B cell (primary cell): ENCODE measurements at regions of chr15 and their contacts with region 1.

Region 1: DNA sequence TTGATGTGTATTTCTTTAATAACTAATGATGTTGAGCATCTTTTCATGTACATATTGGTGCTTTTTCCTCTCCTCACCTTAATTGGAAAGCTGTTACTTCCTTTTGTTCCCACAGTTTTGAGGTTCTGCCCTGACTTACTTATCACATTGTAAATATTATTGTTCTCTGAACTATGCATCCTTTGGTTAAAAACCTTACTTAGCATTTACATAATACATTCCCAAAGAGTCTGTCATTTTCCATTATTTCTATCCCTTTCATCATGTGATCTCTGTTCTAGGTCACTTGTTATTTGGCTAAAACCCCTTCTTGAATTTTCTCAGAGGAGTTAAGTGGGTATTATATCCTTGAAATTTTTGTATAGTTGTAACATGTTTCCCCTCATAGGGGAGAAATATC is 33.0 kb downstream of the SLC12A6 start:
- DNase-seq: no peak
- ATAC-seq: no peak
- H3K4me3 ChIP-seq: no peak overlapping the region
- H3K4me3 Mint-ChIP-seq: no peak overlapping the region
- H3K27ac ChIP-seq: peak overlapping the region in 1 of 2 donors; percentile 38
- H3K27ac Mint-ChIP-seq: no peak overlapping the region
- H3K4me1 ChIP-seq: peaks cover 7 to 13% of the 10 kb centered on the region in 2 donors
- H3K4me1 Mint-ChIP-seq: peaks cover 53% of the 10 kb centered on the region
- H3K27me3 ChIP-seq: no peaks in the 10 kb centered on the region
- H3K27me3 Mint-ChIP-seq: no peaks in the 10 kb centered on the region
- CTCF ChIP-seq: no peak

Region 2: DNA sequence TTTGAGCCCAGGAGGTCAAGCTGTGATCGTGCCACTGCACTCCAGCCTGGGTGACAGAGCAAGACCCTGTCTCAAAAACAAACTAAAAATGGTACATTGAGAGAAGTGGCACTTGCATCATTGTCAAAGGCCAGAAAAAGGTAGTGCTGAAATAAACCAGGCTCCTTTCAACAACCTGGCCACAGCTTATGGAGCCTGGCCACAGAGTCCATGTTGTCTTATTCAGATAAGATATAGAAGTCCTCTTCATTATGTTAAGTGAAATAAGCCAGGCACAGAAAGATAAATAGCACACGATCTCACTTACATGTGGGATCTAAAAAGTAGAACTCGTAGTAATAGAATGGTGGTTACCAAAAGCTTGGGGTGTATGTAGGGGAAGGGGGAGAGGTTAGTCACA is 45.0 kb before region 1 on chr15:
- CTCF ChIA-PET with region 1: interaction called, 4 read pairs
- POLR2A ChIA-PET with region 1: no interaction called
- intact Hi-C with region 1: loop called (anchors 10 kb)
- DNase-seq: no peak
- ATAC-seq: no peak
- H3K4me3 ChIP-seq: no peak overlapping the region
- H3K4me3 Mint-ChIP-seq: no peak overlapping the region
- H3K27ac ChIP-seq: no peak overlapping the region
- H3K27ac Mint-ChIP-seq: peak overlapping the region; percentile 28
- H3K4me1 ChIP-seq: no peaks in the 10 kb centered on the region
- H3K4me1 Mint-ChIP-seq: no peaks in the 10 kb centered on the region
- H3K27me3 ChIP-seq: no peaks in the 10 kb centered on the region
- H3K27me3 Mint-ChIP-seq: no peaks in the 10 kb centered on the region
- CTCF ChIP-seq: no peak

Region 3: GRCh38 chr15:34318277-34319079 is 13.9 kb after region 1 on chr15:
- CTCF ChIA-PET with region 1: interaction called, 3 read pairs
- POLR2A ChIA-PET with region 1: interaction called, 8 read pairs
- intact Hi-C with region 1: loop called (anchors 2 kb)
- DNase-seq: peak; percentile 52
- ATAC-seq: peak; percentile 77
- H3K4me3 ChIP-seq: peak overlapping the region; percentile 45 to 88 (median 70)
- H3K4me3 Mint-ChIP-seq: peak overlapping the region; percentile 89
- H3K27ac ChIP-seq: peak overlapping the region; percentile 41 to 81
- H3K27ac Mint-ChIP-seq: peak overlapping the region; percentile 76
- H3K4me1 ChIP-seq: peaks cover 24 to 30% of the 10 kb centered on the region in 2 donors
- H3K4me1 Mint-ChIP-seq: peaks cover 65% of the 10 kb centered on the region
- H3K27me3 ChIP-seq: no peaks in the 10 kb centered on the region
- H3K27me3 Mint-ChIP-seq: no peaks in the 10 kb centered on the region
- CTCF ChIP-seq: no peak

Region 4: GRCh38 chr15:34342737-34343575 is 38.3 kb after region 1 on chr15 and contains the starts of genes NOP10 and NUTM1:
- CTCF ChIA-PET with region 1: no interaction called
- POLR2A ChIA-PET with region 1: no interaction called
- intact Hi-C with region 1: no loop called
- DNase-seq: peak; percentile 93
- ATAC-seq: peak; percentile 85
- H3K4me3 ChIP-seq: peak within 1 kb of the TSS; percentile 94 to 99 (median 98)
- H3K4me3 Mint-ChIP-seq: peak within 1 kb of the TSS; percentile 85
- H3K27ac ChIP-seq: peak within 1 kb of the TSS; percentile 79 to 81
- H3K27ac Mint-ChIP-seq: peak within 1 kb of the TSS; percentile 63
- H3K4me1 ChIP-seq: peaks cover 16 to 18% of the 10 kb centered on the region in 2 donors
- H3K4me1 Mint-ChIP-seq: peaks cover 20% of the 10 kb centered on the region
- H3K27me3 ChIP-seq: no peaks in the 10 kb centered on the region
- H3K27me3 Mint-ChIP-seq: no peaks in the 10 kb centered on the region
- CTCF ChIP-seq: peak; percentile 97
- total RNA-seq, gene NOP10: 65.6 and 68.2 TPM in 2 replicates
- total RNA-seq, gene NUTM1: not detected in 2 replicates